Right cardiac atrium (tissue), 5 donors: ENCODE measurements at regions of chr11 and their contacts with region 1.

Region 1: GRCh38 chr11:727859-728748 is 19.2 kb upstream of the TALDO1 start:
- DNase-seq: peak; percentile 90 to 94 (median 91)
- ATAC-seq: peak; percentile 81 to 82
- H3K4me3 ChIP-seq: no peak overlapping the region
- H3K27ac ChIP-seq: no peak overlapping the region
- H3K4me1 ChIP-seq: peaks cover 2% of the 10 kb centered on the region
- H3K27me3 ChIP-seq: no peaks in the 10 kb centered on the region

Region 2: GRCh38 chr11:554824-555472 is 173.2 kb before region 1 on chr11:
- intact Hi-C with region 1: loop called (anchors 2 to 10 kb)
- DNase-seq: peak in 2 of 3 donors; percentile 80 to 81
- ATAC-seq: peak; percentile 27 to 39
- H3K4me3 ChIP-seq: peak overlapping the region; percentile 24
- H3K27ac ChIP-seq: no peak overlapping the region
- H3K4me1 ChIP-seq: no peaks in the 10 kb centered on the region
- H3K27me3 ChIP-seq: no peaks in the 10 kb centered on the region

Region 3: DNA sequence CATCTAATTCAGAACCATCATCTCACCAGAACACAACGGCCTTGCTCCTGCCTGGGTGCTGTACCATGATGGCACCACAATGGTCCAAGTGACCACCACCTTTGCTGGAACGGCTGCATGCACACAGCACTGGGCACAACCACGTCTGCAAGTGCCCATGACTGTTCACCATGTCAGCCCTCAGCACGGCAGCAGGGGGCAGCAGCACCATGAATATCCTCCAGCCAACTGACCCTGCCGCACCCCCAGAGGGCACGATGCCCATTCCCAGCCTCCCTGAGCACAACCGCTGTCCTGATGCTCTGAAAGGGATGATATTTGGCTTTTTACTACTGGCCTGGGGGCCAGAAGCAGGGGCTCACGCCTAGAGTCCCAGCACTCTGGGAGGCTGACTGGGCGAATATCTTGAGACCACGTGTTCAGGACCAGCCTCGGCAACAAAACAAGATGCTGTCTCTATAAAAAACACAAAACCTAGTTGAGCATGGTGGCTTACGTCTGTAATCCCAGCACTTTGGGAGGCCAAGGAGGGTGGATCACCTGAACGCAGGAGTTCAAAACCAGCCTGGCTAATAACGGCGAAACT is 65.3 kb before region 1 on chr11:
- intact Hi-C with region 1: loop called (anchors 5 to 10 kb)
- DNase-seq: peak; percentile 77 to 91 (median 88)
- ATAC-seq: peak; percentile 78 to 79
- H3K4me3 ChIP-seq: no peak overlapping the region
- H3K27ac ChIP-seq: no peak overlapping the region
- H3K4me1 ChIP-seq: no peaks in the 10 kb centered on the region
- H3K27me3 ChIP-seq: no peaks in the 10 kb centered on the region